CD4-positive, alpha-beta memory T cell (primary cell): ENCODE measurements at regions of chr2 and their contacts with region 1.

Region 1: DNA sequence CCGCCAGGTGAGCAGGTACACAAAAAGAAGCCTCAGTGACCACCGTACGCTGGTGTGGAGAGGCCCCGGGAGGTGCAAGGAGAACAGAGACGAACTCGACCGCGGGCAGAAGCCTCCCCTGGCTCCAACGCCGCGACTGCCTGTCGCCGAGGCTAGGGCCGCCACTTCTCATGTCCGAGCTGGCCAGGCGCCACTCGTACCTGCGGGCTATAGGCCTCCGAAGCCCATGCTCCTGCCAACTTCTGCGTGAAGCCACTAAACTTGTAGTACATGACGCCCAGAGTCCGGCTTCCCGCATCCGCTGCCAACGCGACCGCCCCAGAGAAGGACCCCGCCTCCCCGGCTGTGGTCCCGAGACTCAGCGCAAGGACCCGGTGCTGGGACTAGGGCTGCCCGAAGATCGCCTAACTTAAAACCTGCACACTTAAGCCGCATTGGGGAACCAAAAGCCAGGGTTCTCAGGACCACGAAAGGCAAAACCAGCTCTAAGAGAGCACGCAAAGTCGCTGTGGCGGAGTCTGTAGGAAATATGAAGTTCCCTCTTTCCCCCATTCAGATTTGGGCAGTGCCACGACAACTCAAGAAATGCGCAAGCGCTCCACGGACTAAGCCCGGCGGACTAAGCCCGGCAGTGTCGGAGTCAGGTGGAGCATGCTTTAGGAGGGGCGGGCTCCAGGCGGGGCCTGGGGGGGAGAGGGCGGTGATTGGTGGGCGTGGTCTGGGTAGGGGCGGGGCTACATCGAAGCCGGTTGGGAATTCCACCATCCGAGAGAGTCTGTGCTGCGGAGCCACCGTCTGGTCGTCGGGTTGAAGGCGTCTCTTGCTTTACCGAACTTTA is at the start of gene COX7A2L:
- DNase-seq: peak; percentile 96 to 97 (median 97)
- H3K4me3 ChIP-seq: peak within 1 kb of the TSS; percentile 84 to 97
- H3K4me3 Mint-ChIP-seq: peak within 1 kb of the TSS; percentile 89 to 97 (median 94)
- H3K27ac ChIP-seq: peak within 1 kb of the TSS; percentile 93
- H3K27ac Mint-ChIP-seq: peak within 1 kb of the TSS; percentile 96 to 100 (median 98)
- H3K4me1 ChIP-seq: peaks cover 47% of the 10 kb centered on the region
- H3K4me1 Mint-ChIP-seq: peaks cover 37 to 56% (median 48%) of the 10 kb centered on the region in 4 donors
- H3K27me3 ChIP-seq: no peaks in the 10 kb centered on the region
- H3K27me3 Mint-ChIP-seq: no peaks in the 10 kb centered on the region
- total RNA-seq, gene COX7A2L: 77.2 to 77.7 TPM

Region 2: GRCh38 chr2:41222628-41223027 is 1138.5 kb before region 1 on chr2:
- CTCF ChIA-PET with region 1: no interaction called
- POLR2A ChIA-PET with region 1: no interaction called
- intact Hi-C with region 1: no loop called
- DNase-seq: no peak
- H3K4me3 ChIP-seq: no peak overlapping the region
- H3K4me3 Mint-ChIP-seq: no peak overlapping the region
- H3K27ac ChIP-seq: no peak overlapping the region
- H3K27ac Mint-ChIP-seq: no peak overlapping the region
- H3K4me1 ChIP-seq: no peaks in the 10 kb centered on the region
- H3K4me1 Mint-ChIP-seq: no peaks in the 10 kb centered on the region
- H3K27me3 ChIP-seq: no peaks in the 10 kb centered on the region
- H3K27me3 Mint-ChIP-seq: no peaks in the 10 kb centered on the region

Region 3: GRCh38 chr2:42102024-42102590 is 259.0 kb before region 1 on chr2:
- CTCF ChIA-PET with region 1: no interaction called
- POLR2A ChIA-PET with region 1: interaction called, 5 read pairs
- intact Hi-C with region 1: loop called (anchors 1 kb)
- DNase-seq: peak; percentile 96 to 98 (median 96)
- H3K4me3 ChIP-seq: peak overlapping the region; percentile 53 to 64
- H3K4me3 Mint-ChIP-seq: peak overlapping the region in 7 of 8 donors; percentile 85 to 90 (median 87)
- H3K27ac ChIP-seq: peak overlapping the region; percentile 100
- H3K27ac Mint-ChIP-seq: no peak overlapping the region
- H3K4me1 ChIP-seq: peaks cover 94% of the 10 kb centered on the region
- H3K4me1 Mint-ChIP-seq: peaks cover 38 to 64% (median 51%) of the 10 kb centered on the region in 4 donors
- H3K27me3 ChIP-seq: no peaks in the 10 kb centered on the region
- H3K27me3 Mint-ChIP-seq: no peaks in the 10 kb centered on the region

Region 4: GRCh38 chr2:42296226-42296625 is 64.9 kb before region 1 on chr2:
- CTCF ChIA-PET with region 1: no interaction called
- POLR2A ChIA-PET with region 1: interaction called, 3 read pairs
- intact Hi-C with region 1: loop called (anchors 1 kb)
- DNase-seq: no peak
- H3K4me3 ChIP-seq: no peak overlapping the region
- H3K4me3 Mint-ChIP-seq: peak overlapping the region; percentile 18 to 84 (median 52)
- H3K27ac ChIP-seq: peak overlapping the region; percentile 3
- H3K27ac Mint-ChIP-seq: peak overlapping the region; percentile 9 to 95 (median 89)
- H3K4me1 ChIP-seq: peaks cover 79% of the 10 kb centered on the region
- H3K4me1 Mint-ChIP-seq: peaks cover 51 to 83% (median 61%) of the 10 kb centered on the region in 4 donors
- H3K27me3 ChIP-seq: no peaks in the 10 kb centered on the region
- H3K27me3 Mint-ChIP-seq: no peaks in the 10 kb centered on the region

Region 5: DNA sequence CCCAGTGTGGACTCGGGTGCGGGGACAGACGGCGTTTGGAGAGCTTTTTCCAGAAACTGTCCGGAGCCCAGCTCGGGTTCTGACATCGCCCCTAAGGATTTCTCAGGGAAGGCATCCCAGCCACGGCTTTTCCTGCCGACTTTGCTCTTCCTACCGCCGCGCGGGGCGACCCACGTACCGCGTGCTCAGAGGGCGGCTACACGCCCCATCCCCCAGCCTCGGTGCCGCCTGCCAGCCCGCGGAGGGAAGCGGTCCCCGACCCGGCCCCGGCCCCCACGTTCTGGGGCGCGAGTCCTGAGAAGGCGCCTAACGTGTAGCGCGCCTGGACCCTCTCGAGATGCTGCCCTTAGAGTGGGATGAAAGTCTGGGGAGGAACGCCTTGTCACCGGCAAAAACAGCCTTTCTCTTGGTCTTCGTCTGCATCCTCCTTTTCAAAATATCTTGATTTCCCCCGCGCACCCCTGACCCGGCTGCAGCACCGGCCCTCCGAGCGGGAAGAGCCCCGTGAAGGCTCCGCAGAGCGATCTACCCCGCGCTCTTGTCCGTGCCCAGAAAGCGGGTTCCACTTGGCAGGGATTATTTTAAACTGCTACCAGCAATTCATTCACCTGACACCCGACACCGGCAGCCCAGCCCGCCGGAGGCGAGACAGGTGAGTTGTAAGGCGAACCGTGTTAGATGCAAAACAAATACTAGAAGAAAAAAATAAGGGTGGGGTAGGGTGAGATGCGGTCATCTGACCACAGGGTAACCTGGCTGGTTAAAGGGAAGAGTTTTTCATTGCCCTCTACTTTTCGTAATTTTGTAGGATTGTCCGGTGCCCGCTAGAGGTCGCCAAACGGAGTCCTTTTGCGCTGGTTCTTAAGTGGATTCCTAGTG is 133.5 kb after region 1 on chr2:
- CTCF ChIA-PET with region 1: no interaction called
- POLR2A ChIA-PET with region 1: no interaction called
- intact Hi-C with region 1: loop called (anchors 5 kb)
- DNase-seq: peak; percentile 69 to 74 (median 70)
- H3K4me3 ChIP-seq: peak overlapping the region; percentile 66 to 77
- H3K4me3 Mint-ChIP-seq: peak overlapping the region; percentile 91 to 98 (median 94)
- H3K27ac ChIP-seq: no peak overlapping the region
- H3K27ac Mint-ChIP-seq: peak overlapping the region in 5 of 7 donors; percentile 44 to 79 (median 69)
- H3K4me1 ChIP-seq: no peaks in the 10 kb centered on the region
- H3K4me1 Mint-ChIP-seq: peaks cover 2 to 15% (median 7%) of the 10 kb centered on the region in 4 donors
- H3K27me3 ChIP-seq: peaks cover 9% of the 10 kb centered on the region
- H3K27me3 Mint-ChIP-seq: peaks cover 11 to 22% of the 10 kb centered on the region in 2 donors

Region 6: GRCh38 chr2:42810121-42810970 is 449.2 kb after region 1 on chr2:
- CTCF ChIA-PET with region 1: no interaction called
- POLR2A ChIA-PET with region 1: interaction called, 3 read pairs
- intact Hi-C with region 1: loop called (anchors 2 kb)
- DNase-seq: peak; percentile 96 to 97 (median 97)
- H3K4me3 ChIP-seq: peak overlapping the region; percentile 90 to 98
- H3K4me3 Mint-ChIP-seq: peak overlapping the region; percentile 93 to 99 (median 97)
- H3K27ac ChIP-seq: peak overlapping the region; percentile 81
- H3K27ac Mint-ChIP-seq: peak overlapping the region; percentile 95 to 99 (median 99)
- H3K4me1 ChIP-seq: peaks cover 9% of the 10 kb centered on the region
- H3K4me1 Mint-ChIP-seq: peaks cover 9 to 33% (median 17%) of the 10 kb centered on the region in 4 donors
- H3K27me3 ChIP-seq: no peaks in the 10 kb centered on the region
- H3K27me3 Mint-ChIP-seq: peaks cover 0 to 2% of the 10 kb centered on the region in 2 donors

Region 7: GRCh38 chr2:44361330-44362206 is 2000.5 kb after region 1 on chr2 and contains the starts of genes CAMKMT and PREPL:
- CTCF ChIA-PET with region 1: no interaction called
- POLR2A ChIA-PET with region 1: no interaction called
- intact Hi-C with region 1: loop called (anchors 1 kb)
- DNase-seq: peak; percentile 98 to 99 (median 99)
- H3K4me3 ChIP-seq: peak within 1 kb of the TSS; percentile 93 to 96
- H3K4me3 Mint-ChIP-seq: peak within 1 kb of the TSS; percentile 97 to 99 (median 98)
- H3K27ac ChIP-seq: peak within 1 kb of the TSS; percentile 98
- H3K27ac Mint-ChIP-seq: peak within 1 kb of the TSS; percentile 98 to 100 (median 100)
- H3K4me1 ChIP-seq: peaks cover 51% of the 10 kb centered on the region
- H3K4me1 Mint-ChIP-seq: peaks cover 28 to 70% (median 45%) of the 10 kb centered on the region in 4 donors
- H3K27me3 ChIP-seq: no peaks in the 10 kb centered on the region
- H3K27me3 Mint-ChIP-seq: no peaks in the 10 kb centered on the region
- total RNA-seq, gene CAMKMT: 15.3 to 16.2 TPM
- total RNA-seq, gene PREPL: 39.5 to 42.8 TPM